Activated B cell treated with CpG ODN at 0.5 μM for 24 hours (primary cell): ENCODE measurements at regions of chr3 and their contacts with region 1.

Region 1: DNA sequence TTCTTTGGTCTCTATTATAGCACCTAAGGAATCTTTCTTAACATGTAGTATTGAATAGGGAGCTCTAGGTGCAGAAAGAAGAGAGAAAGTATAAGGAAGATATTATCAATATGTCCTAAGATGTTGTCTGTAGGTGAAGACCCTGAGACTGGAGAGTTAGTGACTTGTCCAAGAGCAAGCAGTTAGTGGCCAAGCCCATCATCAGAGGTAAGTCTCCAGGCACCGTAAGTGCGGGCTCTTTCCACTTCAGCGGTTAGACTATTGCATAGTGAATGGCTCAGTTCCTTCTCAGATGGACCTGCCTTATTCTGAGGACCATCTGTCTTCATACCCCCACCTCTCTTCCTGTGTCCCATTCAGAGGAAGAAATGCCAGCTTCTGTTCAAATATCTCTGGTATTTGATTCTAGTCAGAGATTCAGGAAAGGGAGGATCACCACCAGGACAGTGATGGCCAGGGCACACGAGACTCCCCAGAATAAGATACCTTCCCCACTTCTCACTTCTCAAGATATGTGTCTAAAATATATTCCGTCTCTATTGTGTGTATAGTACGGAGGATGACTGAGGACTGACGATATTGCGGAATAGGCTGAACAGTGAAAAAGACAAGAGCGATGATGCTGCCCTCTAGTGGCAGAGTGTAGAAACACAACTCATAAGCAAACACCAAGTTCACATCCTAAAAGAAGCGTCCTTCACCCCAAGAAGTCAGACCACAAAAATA is 19.1 kb upstream of the ADGRG7 start:
- DNase-seq: no peak
- ATAC-seq: peak; percentile 92
- H3K4me3 Mint-ChIP-seq: no peak overlapping the region
- H3K27ac Mint-ChIP-seq: no peak overlapping the region
- H3K4me1 Mint-ChIP-seq: peaks cover 4% of the 10 kb centered on the region
- H3K27me3 Mint-ChIP-seq: peaks cover 2% of the 10 kb centered on the region
- CTCF ChIP-seq: peak; percentile 77

Region 2: GRCh38 chr3:99833617-99834205 is 756.6 kb before region 1 on chr3:
- CTCF ChIA-PET with region 1: interaction called, 28 read pairs
- POLR2A ChIA-PET with region 1: no interaction called
- intact Hi-C with region 1: loop called (anchors 1 kb)
- DNase-seq: no peak
- ATAC-seq: no peak
- H3K4me3 Mint-ChIP-seq: no peak overlapping the region
- H3K27ac Mint-ChIP-seq: no peak overlapping the region
- H3K4me1 Mint-ChIP-seq: no peaks in the 10 kb centered on the region
- H3K27me3 Mint-ChIP-seq: no peaks in the 10 kb centered on the region
- CTCF ChIP-seq: no peak

Region 3: DNA sequence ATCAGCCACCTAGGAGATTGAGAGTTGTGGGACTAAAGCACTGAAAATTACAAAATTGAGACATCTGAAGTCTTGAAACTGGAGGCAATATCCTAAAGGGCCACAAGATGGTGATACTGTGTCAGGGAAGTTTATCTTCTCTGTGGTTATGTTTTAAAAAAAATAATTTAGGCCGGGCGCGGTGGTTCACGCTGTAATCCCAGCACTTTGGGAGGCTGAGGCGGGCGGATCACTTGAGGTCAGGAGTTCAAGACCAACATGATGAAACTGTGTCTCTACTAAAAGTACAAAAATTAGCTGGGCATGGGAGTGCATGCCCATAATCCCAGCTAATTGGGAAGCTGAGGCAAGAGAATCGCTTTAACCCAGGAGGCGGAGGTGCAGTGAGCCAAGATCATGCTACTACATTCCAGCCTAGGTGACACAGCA is 273.6 kb before region 1 on chr3:
- CTCF ChIA-PET with region 1: interaction called, 29 read pairs
- POLR2A ChIA-PET with region 1: no interaction called
- intact Hi-C with region 1: loop called (anchors 1 kb)
- DNase-seq: no peak
- ATAC-seq: peak; percentile 68
- H3K4me3 Mint-ChIP-seq: no peak overlapping the region
- H3K27ac Mint-ChIP-seq: no peak overlapping the region
- H3K4me1 Mint-ChIP-seq: peaks cover 2% of the 10 kb centered on the region
- H3K27me3 Mint-ChIP-seq: no peaks in the 10 kb centered on the region
- CTCF ChIP-seq: no peak

Region 4: GRCh38 chr3:100603469-100603868 is 13.2 kb after region 1 on chr3:
- CTCF ChIA-PET with region 1: interaction called, 10 read pairs
- POLR2A ChIA-PET with region 1: no interaction called
- intact Hi-C with region 1: no loop called
- DNase-seq: no peak
- ATAC-seq: peak; percentile 45
- H3K4me3 Mint-ChIP-seq: peak overlapping the region; percentile 83
- H3K27ac Mint-ChIP-seq: peak overlapping the region; percentile 97
- H3K4me1 Mint-ChIP-seq: peaks cover 27% of the 10 kb centered on the region
- H3K27me3 Mint-ChIP-seq: peaks cover 3% of the 10 kb centered on the region
- CTCF ChIP-seq: no peak